ENCODE measurements at regions of chr21 and their contacts with region 1.

Region 1: DNA sequence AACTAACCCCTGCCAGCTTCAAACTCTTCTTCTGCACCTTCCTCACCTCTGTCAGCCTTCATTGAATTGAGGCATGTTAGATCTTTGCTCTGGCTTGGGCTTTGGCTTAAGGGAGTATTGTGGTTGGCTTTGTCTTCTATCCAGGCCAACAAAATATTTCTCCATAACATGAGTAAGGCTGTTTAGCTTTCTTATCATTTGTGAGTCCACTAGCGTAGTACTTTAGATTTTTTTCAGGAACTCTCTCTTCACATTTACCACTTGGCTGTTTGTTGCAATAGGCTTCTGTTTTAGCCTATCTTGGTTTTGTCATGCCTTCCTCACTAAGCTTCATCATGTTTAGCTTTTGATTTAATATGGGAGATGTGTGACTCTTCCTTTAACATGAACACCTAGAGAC is 417.5 kb downstream of the NCAM2 start:
- DNase-seq: no peak
- ATAC-seq: no peak
- H3K4me3 Mint-ChIP-seq: no peak overlapping the region
- H3K27ac Mint-ChIP-seq: no peak overlapping the region
- H3K4me1 Mint-ChIP-seq: no peaks in the 10 kb centered on the region
- H3K27me3 Mint-ChIP-seq: no peaks in the 10 kb centered on the region

Region 2: GRCh38 chr21:21464684-21465083 is 48.9 kb after region 1 on chr21:
- CTCF ChIA-PET with region 1: no interaction called
- POLR2A ChIA-PET with region 1: no interaction called
- intact Hi-C with region 1: loop called in 1 of 2 experiments (anchors 5 kb)
- DNase-seq: no peak
- ATAC-seq: no peak
- H3K4me3 Mint-ChIP-seq: no peak overlapping the region
- H3K27ac Mint-ChIP-seq: no peak overlapping the region
- H3K4me1 Mint-ChIP-seq: no peaks in the 10 kb centered on the region
- H3K27me3 Mint-ChIP-seq: no peaks in the 10 kb centered on the region